Common myeloid progenitor, CD34-positive (primary cell): ENCODE measurements at regions of chr4 and their contacts with region 1.

Region 1: DNA sequence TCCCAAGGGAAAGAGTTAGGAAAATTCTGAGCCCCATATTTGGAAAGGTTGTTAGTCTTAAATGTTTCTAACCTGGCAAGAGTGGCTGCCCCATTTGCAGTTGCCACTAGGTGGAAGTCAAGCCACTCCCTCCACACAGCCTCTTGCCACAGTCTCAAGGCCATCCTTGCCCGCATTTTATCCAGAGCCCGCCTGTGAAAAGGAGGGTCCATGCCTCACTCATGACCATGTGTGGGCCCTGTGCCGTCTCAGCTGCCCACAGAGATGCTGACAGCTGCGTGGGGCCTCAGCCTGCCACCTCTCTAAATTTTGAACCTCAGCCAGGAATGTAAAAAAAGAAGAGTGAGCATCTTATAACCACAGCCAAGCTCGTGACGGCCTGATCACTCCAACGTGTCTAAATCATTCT is 201.5 kb upstream of the FAM241A start:
- DNase-seq: peak; percentile 60 to 73 (median 67)
- H3K4me3 ChIP-seq: peak overlapping the region in 1 of 7 experiments; percentile 31
- H3K27ac ChIP-seq: no peak overlapping the region
- H3K4me1 ChIP-seq: peaks cover 0 to 4% (median 0%) of the 10 kb centered on the region in 4 experiments
- H3K27me3 ChIP-seq: peaks cover 0 to 1% (median 0%) of the 10 kb centered on the region in 5 experiments

Region 2: DNA sequence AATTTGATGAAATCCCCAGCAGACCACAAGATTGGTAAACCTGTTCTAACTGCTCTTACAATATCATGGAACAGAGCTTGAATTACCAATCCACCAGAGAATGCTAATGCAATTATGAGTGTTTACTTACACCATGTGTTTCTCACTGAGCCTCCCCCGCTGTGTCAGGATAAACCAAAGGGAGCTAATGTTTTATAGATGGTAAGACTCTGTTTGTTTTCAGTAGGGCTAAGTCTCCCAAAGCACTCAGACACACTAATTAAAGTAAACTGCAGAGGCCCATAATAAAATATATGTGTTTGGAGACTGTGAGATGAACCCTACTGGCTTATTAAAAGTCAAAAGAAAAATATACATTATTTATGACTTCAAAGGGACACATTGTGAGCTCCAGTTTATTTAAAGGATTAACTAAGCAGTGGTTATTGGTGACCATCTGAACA is 60.2 kb before region 1 on chr4:
- CTCF ChIA-PET with region 1: no interaction called
- POLR2A ChIA-PET with region 1: no interaction called
- DNase-seq: no peak
- H3K4me3 ChIP-seq: no peak overlapping the region
- H3K27ac ChIP-seq: no peak overlapping the region
- H3K4me1 ChIP-seq: no peaks in the 10 kb centered on the region
- H3K27me3 ChIP-seq: no peaks in the 10 kb centered on the region

Region 3: DNA sequence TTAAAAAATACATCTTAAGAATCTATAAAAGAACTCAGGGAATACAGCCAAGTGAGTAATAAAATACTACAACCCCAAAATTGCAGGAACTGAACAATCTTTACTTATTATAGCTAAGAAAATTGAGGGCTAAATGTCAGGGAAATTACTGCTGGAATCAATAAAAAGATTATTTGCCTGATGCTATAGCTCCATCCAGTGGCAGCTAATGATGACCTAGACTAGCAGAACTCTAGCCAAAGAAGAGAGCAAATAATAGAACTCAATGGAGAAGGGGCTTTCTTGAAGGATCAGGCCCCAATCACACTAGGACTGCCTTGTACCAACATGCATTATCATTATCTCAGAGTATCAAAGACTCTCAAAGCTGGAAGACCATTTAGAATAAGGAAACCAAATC is 116.4 kb after region 1 on chr4:
- CTCF ChIA-PET with region 1: interaction called, 12 read pairs
- POLR2A ChIA-PET with region 1: no interaction called
- DNase-seq: peak; percentile 47 to 63 (median 54)
- H3K4me3 ChIP-seq: no peak overlapping the region
- H3K27ac ChIP-seq: no peak overlapping the region
- H3K4me1 ChIP-seq: peaks cover 0 to 20% (median 10%) of the 10 kb centered on the region in 4 experiments
- H3K27me3 ChIP-seq: no peaks in the 10 kb centered on the region

Region 4: DNA sequence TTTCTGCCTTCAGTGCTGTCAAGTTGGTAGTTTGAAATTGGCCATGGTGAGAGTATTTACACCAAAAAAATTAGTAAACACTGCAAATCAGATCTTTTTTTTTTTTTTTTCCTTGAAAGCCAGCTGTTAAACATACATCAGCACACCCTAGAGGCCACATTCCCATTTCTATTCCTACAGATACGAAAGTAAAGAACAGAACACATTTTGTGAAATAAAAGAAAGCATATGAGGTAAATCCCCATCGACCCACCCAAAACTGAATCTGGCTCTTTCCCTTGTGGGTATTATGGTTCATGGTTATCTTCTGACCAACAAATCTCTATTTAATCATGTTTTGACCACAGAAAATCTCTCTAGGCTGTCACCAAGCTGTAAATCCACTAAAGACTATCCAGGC is 246.0 kb after region 1 on chr4:
- CTCF ChIA-PET with region 1: no interaction called
- POLR2A ChIA-PET with region 1: no interaction called
- DNase-seq: peak; percentile 22 to 47 (median 45)
- H3K4me3 ChIP-seq: no peak overlapping the region
- H3K27ac ChIP-seq: no peak overlapping the region
- H3K4me1 ChIP-seq: no peaks in the 10 kb centered on the region
- H3K27me3 ChIP-seq: no peaks in the 10 kb centered on the region